ENCODE measurements at regions of chrX and their contacts with region 1.

Region 1: DNA sequence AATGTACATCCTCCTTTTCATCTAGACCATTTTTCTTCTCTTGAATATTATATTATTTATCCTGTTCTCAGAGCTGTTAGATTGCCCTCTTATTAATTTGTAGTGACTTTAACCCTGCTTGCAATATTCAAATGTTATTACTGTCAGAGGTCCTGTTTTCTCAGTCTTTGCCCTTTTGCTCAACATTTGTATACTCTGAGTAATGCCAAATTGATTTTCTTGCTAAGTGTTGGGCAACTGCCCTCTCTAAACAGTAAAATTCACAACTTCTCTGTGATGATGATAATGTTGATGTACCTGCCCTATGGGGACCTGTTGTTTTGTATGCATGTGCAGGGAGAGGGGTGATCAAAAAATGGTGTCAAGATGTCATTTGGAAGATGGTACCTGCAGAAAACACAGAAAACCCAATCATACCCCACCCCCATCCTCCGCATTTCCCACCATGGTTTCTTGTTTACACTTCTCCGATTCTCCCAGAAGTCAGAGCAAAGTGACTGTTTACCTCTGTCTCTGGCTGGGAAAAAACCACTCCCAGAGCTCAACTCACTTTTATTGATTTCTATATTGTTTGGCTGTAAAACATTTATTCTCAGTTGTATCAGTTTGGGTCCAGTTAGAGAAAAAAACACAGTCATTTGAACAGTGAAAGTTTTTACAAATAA is 694.0 kb downstream of the IL1RAPL1 start:
- DNase-seq: no peak
- H3K4me3 ChIP-seq: no peak overlapping the region
- H3K27ac ChIP-seq: no peak overlapping the region
- H3K4me1 ChIP-seq: no peaks in the 10 kb centered on the region
- H3K27me3 ChIP-seq: no peaks in the 10 kb centered on the region
- CTCF ChIP-seq: no peak
- EP300 ChIP-seq: no peak
- POLR2A ChIP-seq: no peak

Region 2: GRCh38 chrX:31112226-31112999 is 1831.2 kb after region 1 on chrX:
- intact Hi-C with region 1: loop called (anchors 10 kb)
- DNase-seq: no peak
- H3K4me3 ChIP-seq: no peak overlapping the region
- H3K27ac ChIP-seq: no peak overlapping the region
- H3K4me1 ChIP-seq: peaks cover 0 to 10% (median 0%) of the 10 kb centered on the region in 4 donors
- H3K27me3 ChIP-seq: no peaks in the 10 kb centered on the region
- CTCF ChIP-seq: no peak
- EP300 ChIP-seq: no peak
- POLR2A ChIP-seq: no peak

Measured in sigmoid colon (tissue), 7 donors.